Left ventricle myocardium inferior (tissue), 1 donor: ENCODE measurements at regions of chr5 and their contacts with region 1.

Region 1: GRCh38 chr5:9361835-9362234 is 184.0 kb downstream of the SEMA5A start:
- DNase-seq: peak; percentile 24
- H3K4me3 ChIP-seq: no peak overlapping the region
- H3K27ac ChIP-seq: no peak overlapping the region
- H3K4me1 ChIP-seq: peaks cover 31% of the 10 kb centered on the region
- H3K27me3 ChIP-seq: no peaks in the 10 kb centered on the region
- CTCF ChIP-seq: peak; percentile 71

Region 2: DNA sequence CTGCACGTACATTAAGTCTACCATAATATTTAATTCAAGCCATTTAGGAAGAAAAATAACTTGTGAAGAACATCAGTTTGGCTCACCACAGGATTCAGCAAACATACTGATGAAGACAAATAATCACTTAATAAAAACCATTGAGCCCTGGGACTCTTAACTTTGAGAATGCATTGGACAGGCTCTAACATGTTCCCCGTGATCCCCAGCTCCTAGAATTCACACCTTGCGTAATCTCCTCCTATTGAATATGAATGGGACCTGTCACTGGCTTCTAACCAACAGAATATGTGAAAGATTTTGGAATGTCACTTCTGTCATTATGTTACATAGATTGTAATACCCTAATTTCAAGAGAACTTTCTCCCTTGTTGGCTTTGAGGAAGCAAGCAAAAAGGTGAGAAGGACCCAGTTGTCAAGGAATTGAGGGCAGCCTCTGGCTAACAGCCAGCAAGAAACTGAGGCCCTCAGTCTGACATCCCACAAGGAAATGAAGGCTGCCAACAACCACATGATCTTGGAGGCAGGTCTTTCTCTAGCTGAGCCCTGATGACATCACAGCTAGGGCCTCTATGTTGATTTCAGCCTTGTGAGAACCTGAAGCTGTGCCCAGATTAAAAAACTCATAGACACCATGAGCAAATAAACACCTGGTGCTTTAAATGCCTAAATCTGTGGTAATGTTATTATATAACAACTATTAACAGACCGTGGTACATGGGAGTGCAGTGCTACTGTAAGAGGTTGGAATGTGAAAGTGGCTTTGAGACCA is 249.1 kb before region 1 on chr5:
- intact Hi-C with region 1: no loop called
- DNase-seq: no peak
- H3K4me3 ChIP-seq: no peak overlapping the region
- H3K27ac ChIP-seq: no peak overlapping the region
- H3K4me1 ChIP-seq: no peaks in the 10 kb centered on the region
- H3K27me3 ChIP-seq: no peaks in the 10 kb centered on the region
- CTCF ChIP-seq: no peak

Region 3: DNA sequence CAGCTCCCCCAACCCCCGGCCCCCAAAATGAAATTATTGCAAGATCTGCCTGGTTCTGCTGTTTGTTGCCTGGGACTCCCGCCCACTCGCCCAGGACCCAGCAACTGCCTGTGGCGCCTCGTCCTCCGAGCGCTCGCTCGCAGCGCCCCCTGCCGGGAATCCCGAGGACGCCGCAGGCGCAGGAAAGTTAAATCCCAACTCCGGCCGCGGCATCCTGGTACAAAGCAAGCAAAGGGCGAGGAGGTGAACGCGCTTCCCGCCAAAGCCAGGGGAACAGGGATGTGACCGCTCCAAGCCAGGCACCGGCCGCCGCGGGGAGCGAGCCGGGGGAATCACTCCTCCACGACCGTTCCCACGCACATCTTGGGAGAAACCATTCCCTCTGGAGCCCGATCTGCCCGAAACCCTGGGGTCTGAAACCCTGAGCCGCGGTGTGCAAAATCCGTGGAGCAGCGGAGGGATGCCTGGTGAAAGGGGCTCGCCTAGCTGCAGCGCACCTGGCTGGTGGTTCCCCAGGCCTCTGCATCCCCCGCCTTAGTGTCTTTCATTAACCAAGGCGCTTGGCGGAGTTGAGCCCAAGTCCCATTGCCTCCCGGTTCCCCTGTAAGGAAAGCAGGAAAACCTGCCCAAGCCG is 182.8 kb after region 1 on chr5:
- intact Hi-C with region 1: loop called (anchors 10 kb)
- DNase-seq: peak; percentile 85
- H3K4me3 ChIP-seq: peak overlapping the region; percentile 86
- H3K27ac ChIP-seq: peak overlapping the region; percentile 91
- H3K4me1 ChIP-seq: peaks cover 66% of the 10 kb centered on the region
- H3K27me3 ChIP-seq: peaks cover 25% of the 10 kb centered on the region
- CTCF ChIP-seq: peak; percentile 86